GM12878 (cell line): ENCODE measurements at regions of chr6 and their contacts with region 1.

Region 1: DNA sequence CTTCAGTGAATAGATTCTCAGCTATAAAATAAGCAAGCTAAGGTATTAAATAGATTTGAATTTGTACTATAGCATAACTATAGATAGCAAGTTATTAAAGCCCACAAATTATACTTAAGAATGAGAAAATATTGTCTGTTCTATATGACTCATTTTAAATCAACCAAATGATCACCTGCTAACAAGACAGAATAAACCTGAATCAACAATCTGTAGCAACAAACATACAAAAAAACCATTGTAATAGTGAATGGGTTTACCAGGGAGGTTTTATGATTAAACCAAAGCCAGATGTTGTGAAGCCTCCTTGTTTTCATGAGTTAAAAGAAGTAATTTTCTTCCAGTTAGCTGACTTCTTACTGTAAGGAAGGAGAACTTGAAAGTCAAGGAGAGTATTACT is 71.9 kb upstream of the HTR1B start:
- DNase-seq: no peak
- ATAC-seq: peak; percentile 15; the same call in 2 of the 3 replicates
- H3K4me3 ChIP-seq: no peak overlapping the region
- H3K27ac ChIP-seq: no peak overlapping the region
- H3K4me1 ChIP-seq: no peaks in the 10 kb centered on the region
- H3K27me3 ChIP-seq: no peaks in the 10 kb centered on the region
- CTCF ChIP-seq: no peak
- EP300 ChIP-seq: no peak
- POLR2A ChIP-seq: no peak
- RAD21 ChIP-seq: no peak

Region 2: GRCh38 chr6:77926198-77926752 is 391.1 kb after region 1 on chr6:
- CTCF ChIA-PET with region 1: interaction called, 9 read pairs
- POLR2A ChIA-PET with region 1: no interaction called
- RAD21 ChIA-PET with region 1: interaction called, 12 read pairs
- SMC1A ChIA-PET with region 1: interaction called, 4 read pairs
- in situ Hi-C with region 1: no loop called
- intact Hi-C with region 1: no loop called
- DNase-seq: no peak
- ATAC-seq: peak; percentile 80
- H3K4me3 ChIP-seq: no peak overlapping the region
- H3K27ac ChIP-seq: no peak overlapping the region
- H3K4me1 ChIP-seq: no peaks in the 10 kb centered on the region
- H3K27me3 ChIP-seq: no peaks in the 10 kb centered on the region
- CTCF ChIP-seq: peak in 2 of 3 experiments; percentile 20 to 45; a peak in 3 of 6 replicates
- EP300 ChIP-seq: no peak
- POLR2A ChIP-seq: no peak
- RAD21 ChIP-seq: peak; percentile 58